Uterus (tissue), 4 donors: ENCODE measurements at regions of chr11 and their contacts with region 1.

Region 1: GRCh38 chr11:114257621-114258558 is 38.3 kb upstream of the NNMT start:
- DNase-seq: peak; percentile 68 to 84
- H3K4me3 ChIP-seq: peak overlapping the region; percentile 21 to 42
- H3K27ac ChIP-seq: peak overlapping the region; percentile 92 to 93
- H3K4me1 ChIP-seq: peaks cover 0 to 5% of the 10 kb centered on the region in 2 donors
- H3K27me3 ChIP-seq: no peaks in the 10 kb centered on the region
- CTCF ChIP-seq: peak in 2 of 4 experiments; percentile 32
- POLR2A ChIP-seq: peak in 1 of 2 donors; percentile 9

Region 2: DNA sequence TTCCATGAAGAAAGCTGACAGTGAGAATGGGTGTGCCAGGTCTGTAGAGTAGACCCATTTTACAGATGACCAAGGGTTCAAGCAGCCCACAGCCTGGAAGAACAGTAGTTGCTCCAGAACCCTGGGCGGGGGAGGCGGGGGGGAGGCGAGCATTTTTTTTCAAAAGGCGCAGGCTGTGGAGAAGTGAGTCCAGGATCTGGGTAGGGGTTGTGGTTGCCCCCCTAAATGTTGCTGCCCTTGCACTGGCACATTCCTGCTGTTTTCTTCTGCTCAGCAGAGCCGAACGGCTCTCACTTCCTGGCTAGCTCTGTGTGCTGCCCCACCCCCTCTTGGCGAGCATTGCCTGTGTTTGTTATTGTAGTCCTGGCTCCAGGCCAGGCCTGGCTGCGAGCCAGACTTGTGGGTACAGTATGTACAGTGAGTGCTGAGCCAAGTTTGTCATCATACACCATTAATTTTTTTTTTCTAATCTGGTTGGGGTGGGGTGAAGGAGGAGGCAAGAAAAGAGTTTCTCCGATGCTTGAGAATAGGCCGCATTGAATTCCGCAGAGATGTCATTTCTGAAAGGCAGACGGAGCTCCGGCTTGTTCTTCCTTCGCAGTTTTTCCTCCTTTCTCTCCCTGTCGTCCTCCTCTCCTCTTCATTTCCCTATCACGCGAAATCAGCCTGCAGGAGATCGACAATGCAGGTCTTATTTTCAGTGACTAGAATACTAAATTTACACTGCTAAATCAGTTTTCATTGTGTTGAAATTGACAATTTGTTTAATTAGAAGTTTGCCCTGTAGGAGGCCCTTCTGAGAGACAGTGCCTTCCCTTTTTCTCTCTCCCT is 97.9 kb before region 1 on chr11:
- intact Hi-C with region 1: loop called (anchors 10 kb)
- DNase-seq: peak; percentile 98 to 99
- H3K4me3 ChIP-seq: peak overlapping the region in 1 of 2 donors; percentile 32
- H3K27ac ChIP-seq: peak overlapping the region; percentile 98 to 100
- H3K4me1 ChIP-seq: peaks cover 38 to 54% of the 10 kb centered on the region in 2 donors
- H3K27me3 ChIP-seq: no peaks in the 10 kb centered on the region
- CTCF ChIP-seq: peak in 1 of 4 experiments; percentile 4
- POLR2A ChIP-seq: peak; percentile 52 to 67

Region 3: DNA sequence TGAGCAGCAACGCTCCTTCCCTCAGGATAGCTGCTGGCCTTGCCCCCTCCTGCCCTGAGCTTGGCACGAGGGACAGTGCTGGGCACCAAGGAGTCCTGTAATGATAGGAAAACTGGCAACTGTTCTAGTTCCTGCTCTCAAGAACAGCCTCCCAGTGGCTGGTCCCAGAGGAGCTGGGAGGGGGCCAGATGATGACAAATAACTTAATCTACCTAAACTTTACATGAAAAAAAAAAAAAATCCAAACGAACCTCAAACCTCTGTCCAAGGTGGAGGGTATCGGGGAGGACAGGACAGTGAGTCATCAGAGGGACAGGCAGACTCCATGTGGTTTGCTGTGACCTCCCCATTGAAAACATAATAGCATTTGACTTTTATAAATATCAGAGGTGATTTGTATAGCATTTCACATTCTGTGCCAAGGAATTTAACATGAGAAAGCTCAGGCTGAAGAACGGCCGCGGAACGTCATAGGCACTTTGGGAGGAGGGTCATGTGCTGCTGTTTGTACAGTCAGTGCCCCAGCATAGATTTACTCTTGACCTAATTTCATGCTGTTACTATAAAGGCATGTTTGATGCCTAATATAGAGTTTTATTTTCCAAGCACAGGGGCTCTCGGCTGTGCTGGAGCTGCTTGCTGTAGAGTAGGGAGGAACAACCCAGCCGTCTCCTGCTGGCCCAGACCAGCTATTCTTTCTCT is 59.9 kb before region 1 on chr11:
- intact Hi-C with region 1: loop called (anchors 10 kb)
- DNase-seq: peak; percentile 71 to 92
- H3K4me3 ChIP-seq: no peak overlapping the region
- H3K27ac ChIP-seq: peak overlapping the region; percentile 88 to 94
- H3K4me1 ChIP-seq: peaks cover 16 to 38% of the 10 kb centered on the region in 2 donors
- H3K27me3 ChIP-seq: no peaks in the 10 kb centered on the region
- CTCF ChIP-seq: no peak
- POLR2A ChIP-seq: peak; percentile 34 to 69